A673 (cell line): ENCODE measurements at regions of chr20 and their contacts with region 1.

Region 1: GRCh38 chr20:51800060-51800794 is 2.1 kb downstream of the SALL4 start:
- DNase-seq: peak; percentile 82
- H3K4me3 ChIP-seq: peak overlapping the region; percentile 74
- H3K27ac ChIP-seq: peak overlapping the region; percentile 89
- H3K4me1 ChIP-seq: peaks cover 40% of the 10 kb centered on the region
- H3K27me3 ChIP-seq: no peaks in the 10 kb centered on the region
- CTCF ChIP-seq: peak; percentile 99

Region 2: DNA sequence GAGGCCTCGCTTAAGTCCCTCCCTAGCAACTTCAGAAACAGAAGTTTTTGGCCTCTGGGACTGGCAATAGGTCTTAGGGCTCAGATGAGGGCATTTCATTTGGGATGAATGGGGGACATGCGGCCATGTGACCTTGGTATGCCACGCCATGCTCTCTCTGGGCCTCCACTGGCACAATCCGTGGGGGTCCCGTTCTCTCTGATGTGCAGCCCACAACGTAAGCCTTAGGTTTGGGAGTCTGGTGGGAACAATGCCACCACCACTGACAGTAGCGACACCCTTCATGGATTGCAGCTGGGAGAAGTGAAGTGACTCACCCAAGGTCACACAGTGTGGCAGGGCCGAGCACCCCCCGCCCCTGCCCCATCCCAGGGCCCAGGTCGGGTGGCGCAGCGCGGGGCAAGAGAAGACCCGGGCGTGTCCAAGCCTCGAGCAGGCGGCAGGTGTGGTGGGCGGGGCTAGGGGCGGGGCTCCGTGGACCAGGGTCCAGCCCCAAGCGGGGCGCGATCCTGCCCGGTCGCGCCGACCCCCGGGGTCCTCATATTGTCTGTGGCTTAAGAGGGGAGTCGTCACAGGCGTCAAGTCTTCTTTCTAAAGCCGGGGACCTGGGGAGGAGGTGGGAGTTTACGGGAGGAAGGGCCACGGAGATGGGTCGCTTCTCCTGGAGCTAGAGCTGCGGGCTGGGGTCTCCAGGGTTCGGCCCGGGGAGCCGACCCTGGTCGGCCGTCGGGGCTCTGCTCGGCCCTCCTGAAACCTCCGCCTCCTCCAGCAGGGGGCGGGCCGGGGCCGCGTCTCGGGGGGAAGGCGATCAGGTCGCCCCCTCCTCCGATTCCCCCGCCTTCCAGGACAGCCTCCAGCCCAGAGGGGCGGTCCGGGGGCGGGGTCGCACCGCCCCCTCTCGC is 1610.3 kb before region 1 on chr20:
- CTCF ChIA-PET with region 1: no interaction called
- POLR2A ChIA-PET with region 1: no interaction called
- intact Hi-C with region 1: no loop called
- DNase-seq: peak; percentile 93
- H3K4me3 ChIP-seq: peak overlapping the region; percentile 97
- H3K27ac ChIP-seq: peak overlapping the region; percentile 99
- H3K4me1 ChIP-seq: peaks cover 43% of the 10 kb centered on the region
- H3K27me3 ChIP-seq: no peaks in the 10 kb centered on the region
- CTCF ChIP-seq: peak; percentile 74

Region 3: GRCh38 chr20:51703400-51704287 is 96.6 kb before region 1 on chr20:
- CTCF ChIA-PET with region 1: interaction called, 3 read pairs
- POLR2A ChIA-PET with region 1: no interaction called
- intact Hi-C with region 1: loop called (anchors 5 kb)
- DNase-seq: peak; percentile 87
- H3K4me3 ChIP-seq: no peak overlapping the region
- H3K27ac ChIP-seq: peak overlapping the region; percentile 46
- H3K4me1 ChIP-seq: peaks cover 56% of the 10 kb centered on the region
- H3K27me3 ChIP-seq: no peaks in the 10 kb centered on the region
- CTCF ChIP-seq: no peak

Region 4: DNA sequence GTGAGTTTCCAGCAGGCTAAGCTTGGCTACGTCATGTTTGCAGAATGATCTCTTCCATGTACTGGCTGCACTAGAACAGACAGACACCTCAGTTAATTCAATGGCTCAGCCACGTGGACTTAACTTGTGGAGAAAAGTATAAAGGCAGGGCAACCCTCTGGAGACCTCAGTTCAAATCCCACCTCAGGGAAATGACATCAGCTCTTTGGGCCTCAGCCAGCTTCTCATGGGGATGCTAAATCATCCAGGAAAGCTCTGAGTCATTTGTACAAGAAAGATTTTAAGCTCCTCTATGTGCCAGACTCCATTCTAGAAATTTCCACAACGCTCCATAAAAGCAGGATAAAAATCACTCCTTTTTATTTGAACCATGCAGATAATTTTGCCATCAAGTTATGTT is 130.5 kb after region 1 on chr20:
- CTCF ChIA-PET with region 1: no interaction called
- POLR2A ChIA-PET with region 1: no interaction called
- intact Hi-C with region 1: loop called (anchors 10 kb)
- DNase-seq: peak; percentile 92
- H3K4me3 ChIP-seq: no peak overlapping the region
- H3K27ac ChIP-seq: peak overlapping the region; percentile 1
- H3K4me1 ChIP-seq: peaks cover 51% of the 10 kb centered on the region
- H3K27me3 ChIP-seq: no peaks in the 10 kb centered on the region
- CTCF ChIP-seq: no peak

Region 5: GRCh38 chr20:51966291-51966971 is 166.2 kb after region 1 on chr20:
- CTCF ChIA-PET with region 1: no interaction called
- POLR2A ChIA-PET with region 1: no interaction called
- intact Hi-C with region 1: loop called (anchors 10 kb)
- DNase-seq: peak; percentile 76
- H3K4me3 ChIP-seq: no peak overlapping the region
- H3K27ac ChIP-seq: no peak overlapping the region
- H3K4me1 ChIP-seq: no peaks in the 10 kb centered on the region
- H3K27me3 ChIP-seq: no peaks in the 10 kb centered on the region
- CTCF ChIP-seq: peak; percentile 84

Region 6: DNA sequence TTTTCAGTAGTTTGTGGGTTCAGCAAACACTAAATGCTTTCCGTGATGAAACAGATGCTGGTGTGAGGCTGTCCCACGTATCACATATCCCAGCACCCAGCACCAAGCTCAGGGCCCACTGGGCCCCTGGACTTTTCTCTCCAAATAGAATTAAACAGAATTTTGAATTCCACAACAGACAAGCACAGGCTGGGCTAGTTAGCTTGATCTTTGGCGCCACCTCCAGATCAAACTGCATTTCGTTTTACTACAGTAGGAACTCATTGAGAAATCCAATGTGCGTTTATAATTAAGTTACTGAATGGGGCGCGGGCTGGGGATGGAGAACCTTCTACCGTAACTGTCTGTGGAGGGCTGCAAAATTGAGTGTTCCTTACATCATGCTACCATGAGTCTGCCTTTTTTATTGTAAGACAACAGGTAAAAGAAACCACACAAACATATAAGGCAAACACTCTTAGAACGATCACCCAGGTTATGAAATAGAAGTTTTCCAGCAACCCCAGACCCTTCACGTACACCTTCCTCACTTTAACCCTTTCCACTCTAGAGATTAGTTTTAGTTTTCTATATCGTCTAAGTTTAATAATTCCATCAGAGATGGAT is 283.5 kb after region 1 on chr20:
- CTCF ChIA-PET with region 1: interaction called, 6 read pairs
- POLR2A ChIA-PET with region 1: no interaction called
- intact Hi-C with region 1: loop called (anchors 2 kb)
- DNase-seq: peak; percentile 86
- H3K4me3 ChIP-seq: no peak overlapping the region
- H3K27ac ChIP-seq: no peak overlapping the region
- H3K4me1 ChIP-seq: peaks cover 20% of the 10 kb centered on the region
- H3K27me3 ChIP-seq: no peaks in the 10 kb centered on the region
- CTCF ChIP-seq: peak; percentile 85